ENCODE measurements at regions of chr10 and their contacts with region 1.

Region 1: GRCh38 chr10:99560277-99561126 is 27.8 kb downstream of the NKX2-3 start:
- DNase-seq: peak; percentile 45
- H3K4me3 Mint-ChIP-seq: no peak overlapping the region
- H3K27ac Mint-ChIP-seq: no peak overlapping the region
- H3K4me1 Mint-ChIP-seq: peaks cover 9% of the 10 kb centered on the region
- H3K27me3 Mint-ChIP-seq: peaks cover 16% of the 10 kb centered on the region

Region 2: GRCh38 chr10:99395750-99396445 is 164.6 kb before region 1 on chr10:
- CTCF ChIA-PET with region 1: interaction called, 3 read pairs
- POLR2A ChIA-PET with region 1: no interaction called
- intact Hi-C with region 1: loop called (anchors 2 kb)
- DNase-seq: no peak
- H3K4me3 Mint-ChIP-seq: no peak overlapping the region
- H3K27ac Mint-ChIP-seq: no peak overlapping the region
- H3K4me1 Mint-ChIP-seq: peaks cover 2% of the 10 kb centered on the region
- H3K27me3 Mint-ChIP-seq: no peaks in the 10 kb centered on the region

Region 3: GRCh38 chr10:99548041-99548530 is 12.4 kb before region 1 on chr10:
- CTCF ChIA-PET with region 1: interaction called, 11 read pairs
- POLR2A ChIA-PET with region 1: no interaction called
- intact Hi-C with region 1: no loop called
- DNase-seq: peak; percentile 33
- H3K4me3 Mint-ChIP-seq: no peak overlapping the region
- H3K27ac Mint-ChIP-seq: no peak overlapping the region
- H3K4me1 Mint-ChIP-seq: no peaks in the 10 kb centered on the region
- H3K27me3 Mint-ChIP-seq: peaks cover 38% of the 10 kb centered on the region

Region 4: DNA sequence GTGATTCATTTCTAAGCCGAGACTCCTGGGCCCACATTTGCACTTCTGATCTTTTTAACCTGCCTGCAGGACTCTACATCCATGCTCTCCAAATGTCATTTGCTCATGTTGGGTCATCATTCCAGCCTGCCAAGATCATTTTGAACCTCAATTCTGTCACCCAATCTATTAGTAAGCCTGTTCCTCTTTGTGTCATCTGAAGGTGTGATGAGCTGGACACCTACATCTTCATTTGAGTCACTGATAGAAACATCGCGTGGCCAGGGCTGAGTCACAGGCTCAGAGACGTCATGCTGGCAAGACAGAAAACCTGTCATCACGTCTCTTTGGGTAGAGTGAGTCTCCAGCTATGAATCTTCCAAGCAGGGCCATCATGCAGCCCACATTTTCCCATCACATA is 1286.9 kb after region 1 on chr10:
- CTCF ChIA-PET with region 1: no interaction called
- POLR2A ChIA-PET with region 1: no interaction called
- intact Hi-C with region 1: no loop called
- DNase-seq: peak; percentile 94
- H3K4me3 Mint-ChIP-seq: peak overlapping the region; percentile 18
- H3K27ac Mint-ChIP-seq: peak overlapping the region; percentile 86
- H3K4me1 Mint-ChIP-seq: peaks cover 28% of the 10 kb centered on the region
- H3K27me3 Mint-ChIP-seq: peaks cover 48% of the 10 kb centered on the region